ENCODE measurements at regions of chr11 and their contacts with region 1.

Region 1: GRCh38 chr11:65597719-65598118 is 2.1 kb upstream of the KCNK7 start:
- DNase-seq: no peak
- H3K4me3 ChIP-seq: no peak overlapping the region
- H3K27ac ChIP-seq: no peak overlapping the region
- H3K4me1 ChIP-seq: peaks cover 34% of the 10 kb centered on the region
- H3K27me3 ChIP-seq: no peaks in the 10 kb centered on the region
- CTCF ChIP-seq: no peak
- POLR2A ChIP-seq: no peak

Region 2: DNA sequence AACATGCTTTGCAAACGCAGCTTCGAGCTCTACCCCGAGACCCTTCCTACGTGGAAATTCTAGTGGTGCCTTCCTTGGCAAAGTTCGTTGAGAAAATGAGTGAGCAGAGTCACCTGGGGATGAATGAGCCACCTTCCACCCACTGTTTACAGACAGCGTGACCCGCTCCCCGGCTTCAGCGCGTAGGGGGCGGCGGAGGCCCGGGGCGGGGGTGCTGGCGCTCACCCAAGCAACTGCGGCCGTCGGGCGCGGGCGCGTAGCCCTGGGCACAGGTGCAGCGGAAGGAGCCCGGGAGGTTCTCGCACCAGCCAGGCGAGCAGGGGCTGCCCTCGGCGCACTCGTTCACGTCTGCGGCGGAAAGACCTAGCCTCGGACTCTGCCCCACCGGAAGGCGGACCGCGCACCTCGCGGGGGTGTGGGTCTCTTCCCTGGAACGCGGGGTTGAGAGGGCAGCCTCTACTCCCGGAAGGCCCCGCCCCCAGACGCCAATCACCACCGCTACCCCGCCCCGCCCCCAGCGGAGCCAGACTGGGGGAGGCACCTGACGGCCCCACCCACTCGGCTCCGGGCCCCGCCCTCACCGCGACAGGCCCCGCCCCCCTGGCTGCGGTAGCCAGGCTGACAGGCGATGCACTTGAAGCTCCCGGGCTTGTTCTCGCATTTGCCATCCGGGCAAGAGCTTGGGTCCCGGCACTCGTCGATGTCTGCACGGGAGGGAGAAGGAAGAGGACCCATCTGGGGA is 51.3 kb before region 1 on chr11:
- intact Hi-C with region 1: no loop called
- DNase-seq: no peak
- H3K4me3 ChIP-seq: peak overlapping the region; percentile 19 to 31
- H3K27ac ChIP-seq: peak overlapping the region; percentile 40
- H3K4me1 ChIP-seq: peaks cover 18% of the 10 kb centered on the region
- H3K27me3 ChIP-seq: no peaks in the 10 kb centered on the region
- CTCF ChIP-seq: no peak
- POLR2A ChIP-seq: no peak

Region 3: GRCh38 chr11:65557272-65558001 is 40.3 kb before region 1 on chr11:
- intact Hi-C with region 1: loop called (anchors 1 kb)
- DNase-seq: no peak
- H3K4me3 ChIP-seq: peak overlapping the region; percentile 62 to 90
- H3K27ac ChIP-seq: peak overlapping the region; percentile 98
- H3K4me1 ChIP-seq: peaks cover 77% of the 10 kb centered on the region
- H3K27me3 ChIP-seq: no peaks in the 10 kb centered on the region
- CTCF ChIP-seq: no peak
- POLR2A ChIP-seq: no peak

Measured in vagina (tissue), 2 donors.